Transverse colon (tissue), 4 donors: ENCODE measurements at regions of chr4 and their contacts with region 1.

Region 1: GRCh38 chr4:25694466-25694865 is 38.8 kb downstream of the SLC34A2 start:
- DNase-seq: no peak
- H3K4me3 ChIP-seq: no peak overlapping the region
- H3K27ac ChIP-seq: no peak overlapping the region
- H3K4me1 ChIP-seq: no peaks in the 10 kb centered on the region
- H3K27me3 ChIP-seq: no peaks in the 10 kb centered on the region
- CTCF ChIP-seq: no peak
- EP300 ChIP-seq: no peak
- POLR2A ChIP-seq: no peak

Region 2: GRCh38 chr4:25654971-25655963 is 39.2 kb before region 1 on chr4 and contains the start of gene SLC34A2:
- in situ Hi-C with region 1: no loop called
- intact Hi-C with region 1: loop called (anchors 1 kb)
- DNase-seq: peak; percentile 15
- H3K4me3 ChIP-seq: peak within 1 kb of the TSS in 1 of 4 donors; percentile 36
- H3K27ac ChIP-seq: no peak within 1 kb of the TSS
- H3K4me1 ChIP-seq: peaks cover 0 to 7% (median 1%) of the 10 kb centered on the region in 4 donors
- H3K27me3 ChIP-seq: peaks cover 46% of the 10 kb centered on the region
- CTCF ChIP-seq: no peak
- EP300 ChIP-seq: no peak
- POLR2A ChIP-seq: no peak
- total RNA-seq, gene SLC34A2: not detected

Region 3: GRCh38 chr4:25743971-25744370 is 49.5 kb after region 1 on chr4:
- in situ Hi-C with region 1: no loop called
- intact Hi-C with region 1: loop called (anchors 1 kb)
- DNase-seq: no peak
- H3K4me3 ChIP-seq: no peak overlapping the region
- H3K27ac ChIP-seq: no peak overlapping the region
- H3K4me1 ChIP-seq: no peaks in the 10 kb centered on the region
- H3K27me3 ChIP-seq: no peaks in the 10 kb centered on the region
- CTCF ChIP-seq: no peak
- EP300 ChIP-seq: no peak
- POLR2A ChIP-seq: no peak